ENCODE measurements at regions of chr1 and their contacts with region 1.

Region 1: DNA sequence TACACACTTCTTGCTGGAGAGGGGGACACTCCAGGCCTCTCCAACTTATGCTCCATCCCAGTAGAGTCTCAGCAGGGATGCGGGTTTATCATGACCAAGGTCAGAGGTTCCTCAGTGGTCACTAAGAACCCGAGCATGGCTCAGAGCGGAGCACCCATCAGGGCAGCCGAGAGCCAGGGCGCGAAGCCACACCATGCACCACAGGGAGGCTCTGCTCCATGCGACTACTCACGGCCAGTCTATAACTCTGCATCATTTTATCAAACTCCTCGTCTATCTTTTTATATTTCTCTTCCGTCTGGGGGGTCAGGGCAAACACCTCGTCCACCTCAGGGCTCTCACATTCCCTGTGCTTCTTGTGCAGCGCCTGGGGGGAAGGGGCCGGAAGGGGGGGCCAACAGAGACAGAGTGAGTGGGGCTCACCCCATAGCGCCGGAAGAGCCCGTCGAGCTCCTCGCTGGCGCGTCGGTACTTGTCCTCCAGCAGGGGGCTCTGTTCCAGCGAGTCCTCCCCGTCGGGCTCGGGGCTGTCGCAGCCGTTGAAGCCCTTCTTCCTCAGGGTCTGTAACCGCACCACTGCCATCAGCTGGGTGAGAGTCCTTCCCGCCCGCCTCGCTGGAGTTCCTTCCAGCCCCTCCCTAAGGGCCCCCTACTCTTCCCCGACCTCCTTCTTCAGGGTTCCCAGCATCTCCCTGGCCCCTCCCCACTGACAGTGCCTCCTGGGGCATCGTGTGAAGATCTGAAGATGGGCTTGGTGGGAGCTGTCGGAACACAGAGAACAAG is 20.0 kb downstream of the MEF2D start:
- DNase-seq: peak in 1 of 2 experiments; percentile 88
- H3K4me3 ChIP-seq: no peak overlapping the region
- H3K27ac ChIP-seq: no peak overlapping the region
- H3K4me1 ChIP-seq: peaks cover 0 to 16% (median 11%) of the 10 kb centered on the region in 4 experiments; a peak in 6 of 7 replicates
- H3K27me3 ChIP-seq: no peaks in the 10 kb centered on the region
- CTCF ChIP-seq: peak; percentile 81 to 88 (median 84)
- EP300 ChIP-seq: 0 out of 3 replicates have a peak, but pooled peaks of 1 of the 2 experiments have one; percentile 31
- POLR2A ChIP-seq: no peak
- RAD21 ChIP-seq: peak; percentile 68 to 76

Region 2: DNA sequence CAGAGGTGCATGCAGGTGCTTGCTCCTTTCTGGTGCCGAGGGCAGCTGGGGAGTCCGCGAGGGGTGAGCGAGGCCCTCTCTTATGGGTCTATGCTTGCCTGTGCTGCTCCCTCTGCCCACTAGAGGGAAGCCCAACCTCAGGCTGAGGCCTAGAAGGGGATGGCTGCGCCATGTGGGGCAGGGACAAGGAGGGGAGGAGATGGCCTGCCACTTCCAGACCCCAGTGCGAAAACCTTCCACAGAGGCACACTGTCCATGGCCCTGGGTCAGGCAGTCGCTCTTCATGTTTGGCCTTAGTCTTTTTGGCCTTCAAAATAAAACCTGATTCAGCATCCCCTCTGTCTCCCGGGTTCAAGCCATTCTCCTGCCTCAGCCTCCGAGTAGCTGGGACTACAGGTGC is 97.6 kb before region 1 on chr1:
- CTCF ChIA-PET with region 1: interaction called, 19 read pairs
- POLR2A ChIA-PET with region 1: no interaction called
- DNase-seq: peak; percentile 67 to 89
- H3K4me3 ChIP-seq: no peak overlapping the region
- H3K27ac ChIP-seq: no peak overlapping the region
- H3K4me1 ChIP-seq: peaks cover 4 to 7% (median 6%) of the 10 kb centered on the region in 4 experiments; a peak in 6 of 7 replicates
- H3K27me3 ChIP-seq: peaks cover 10 to 24% (median 22%) of the 10 kb centered on the region in 4 experiments
- CTCF ChIP-seq: peak in 2 of 3 experiments; percentile 94 to 100; a peak in 3 of 4 replicates
- EP300 ChIP-seq: no peak
- POLR2A ChIP-seq: no peak
- RAD21 ChIP-seq: peak; percentile 92 to 96

Region 3: GRCh38 chr1:156465747-156466365 is 14.7 kb before region 1 on chr1:
- CTCF ChIA-PET with region 1: interaction called, 62 read pairs
- POLR2A ChIA-PET with region 1: interaction called, 5 read pairs
- DNase-seq: peak in 1 of 2 experiments; percentile 73
- H3K4me3 ChIP-seq: no peak overlapping the region
- H3K27ac ChIP-seq: no peak overlapping the region
- H3K4me1 ChIP-seq: peaks cover 0 to 18% (median 8%) of the 10 kb centered on the region in 4 experiments; a peak in 5 of 7 replicates
- H3K27me3 ChIP-seq: no peaks in the 10 kb centered on the region; a peak in 1 of 7 replicates
- CTCF ChIP-seq: peak; percentile 66 to 68 (median 68)
- EP300 ChIP-seq: no peak
- POLR2A ChIP-seq: no peak
- RAD21 ChIP-seq: peak; percentile 66 to 78

Region 4: DNA sequence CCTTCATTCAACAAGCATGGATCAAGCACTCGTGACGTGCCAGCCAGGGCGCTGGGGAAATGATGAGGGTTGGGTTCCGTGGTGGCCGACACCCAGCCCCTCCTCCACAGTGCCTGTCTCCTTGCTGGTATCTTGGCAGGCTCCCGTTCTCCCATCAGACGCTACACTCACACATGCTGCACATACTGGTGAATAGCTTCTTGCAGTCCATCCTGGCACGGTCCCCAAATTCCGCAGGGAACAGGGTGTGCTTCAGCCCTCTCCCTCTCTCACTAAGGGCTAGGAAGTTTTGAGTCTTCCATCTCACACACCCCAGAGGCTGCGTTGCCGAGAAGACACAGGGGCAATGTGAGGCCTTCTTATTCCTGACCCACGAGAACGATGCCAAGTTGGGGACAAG is 30.1 kb after region 1 on chr1:
- CTCF ChIA-PET with region 1: interaction called, 236 read pairs
- POLR2A ChIA-PET with region 1: interaction called, 166 read pairs
- DNase-seq: no peak
- H3K4me3 ChIP-seq: no peak overlapping the region
- H3K27ac ChIP-seq: no peak overlapping the region
- H3K4me1 ChIP-seq: peaks cover 0 to 11% (median 4%) of the 10 kb centered on the region in 4 experiments; a peak in 3 of 7 replicates
- H3K27me3 ChIP-seq: no peaks in the 10 kb centered on the region
- CTCF ChIP-seq: no peak
- EP300 ChIP-seq: no peak
- POLR2A ChIP-seq: no peak
- RAD21 ChIP-seq: no peak

Region 5: GRCh38 chr1:156524481-156524869 is 43.9 kb after region 1 on chr1:
- CTCF ChIA-PET with region 1: interaction called, 10 read pairs
- POLR2A ChIA-PET with region 1: interaction called, 3 read pairs
- DNase-seq: no peak
- H3K4me3 ChIP-seq: no peak overlapping the region
- H3K27ac ChIP-seq: no peak overlapping the region
- H3K4me1 ChIP-seq: peaks cover 3 to 15% (median 11%) of the 10 kb centered on the region in 4 experiments
- H3K27me3 ChIP-seq: no peaks in the 10 kb centered on the region
- CTCF ChIP-seq: no peak
- EP300 ChIP-seq: no peak
- POLR2A ChIP-seq: no peak
- RAD21 ChIP-seq: no peak

Measured in H1 (cell line).